Left cardiac atrium (tissue), 4 donors: ENCODE measurements at regions of chr17 and their contacts with region 1.

Region 1: GRCh38 chr17:3048767-3049471 is 14.5 kb downstream of the OR1D5 start:
- DNase-seq: peak; percentile 96
- ATAC-seq: peak; percentile 99 to 100

Region 2: GRCh38 chr17:3127451-3127850 is 78.5 kb after region 1 on chr17 and contains the start of gene OR1G1:
- intact Hi-C with region 1: no loop called
- DNase-seq: no peak
- ATAC-seq: no peak
- total RNA-seq, gene OR1G1: not detected

Region 3: DNA sequence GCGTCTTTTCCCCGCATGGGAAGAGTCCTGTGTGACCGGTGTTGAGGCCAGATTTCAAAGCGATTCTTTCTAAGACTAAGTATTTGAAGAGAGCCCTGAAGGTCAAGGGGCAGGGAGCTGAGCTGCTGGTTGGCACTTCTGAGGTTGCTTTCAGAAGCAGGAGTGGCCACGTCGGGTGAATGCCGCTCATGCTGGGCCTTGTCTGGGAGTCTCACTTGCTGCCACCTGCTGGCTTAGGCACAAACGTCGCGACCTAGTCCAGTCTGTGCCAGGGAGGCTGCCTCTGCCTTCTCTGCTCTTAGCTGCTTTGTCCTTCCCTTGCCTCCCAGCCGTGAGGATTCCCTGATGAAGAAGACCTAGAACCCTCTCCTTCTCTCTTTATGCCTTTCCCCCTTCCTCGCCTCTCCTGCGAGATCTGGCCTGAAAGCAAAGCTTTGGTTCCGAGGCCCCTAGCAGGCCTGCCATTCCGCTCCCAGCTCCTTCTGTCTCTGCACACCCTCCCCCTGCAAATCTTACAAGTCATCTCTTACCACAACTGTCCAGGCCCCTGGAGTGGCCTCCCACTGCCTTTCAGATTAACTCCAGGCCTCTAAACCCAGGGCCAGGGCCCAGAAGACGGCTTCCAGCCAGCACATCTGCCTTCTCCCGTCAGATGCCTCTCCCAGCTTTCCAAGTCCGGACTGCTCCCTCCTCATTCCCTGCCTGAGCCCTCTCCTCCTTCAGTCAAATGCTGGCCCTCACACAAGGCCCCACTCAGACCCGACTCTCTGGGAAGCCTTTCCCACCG is 599.0 kb after region 1 on chr17:
- intact Hi-C with region 1: loop called in 1 of 2 experiments (anchors 10 kb)
- DNase-seq: peak; percentile 57
- ATAC-seq: peak; percentile 66 to 88